ENCODE measurements at regions of chr1 and their contacts with region 1.

Region 1: GRCh38 chr1:200620273-200621131 is at the start of gene KIF14:
- DNase-seq: peak; percentile 89
- H3K4me3 ChIP-seq: peak within 1 kb of the TSS; percentile 58 to 94 (median 81)
- H3K27ac ChIP-seq: peak within 1 kb of the TSS; percentile 95
- H3K4me1 ChIP-seq: peaks cover 16% of the 10 kb centered on the region
- H3K27me3 ChIP-seq: no peaks in the 10 kb centered on the region
- CTCF ChIP-seq: no peak
- POLR2A ChIP-seq: peak; percentile 51
- total RNA-seq, gene KIF14: 12.6 and 13.8 TPM in 2 replicates

Region 2: GRCh38 chr1:200296091-200296661 is 324.3 kb before region 1 on chr1:
- CTCF ChIA-PET with region 1: no interaction called
- POLR2A ChIA-PET with region 1: no interaction called
- dilution Hi-C with region 1: no loop called
- intact Hi-C with region 1: no loop called
- DNase-seq: no peak
- H3K4me3 ChIP-seq: no peak overlapping the region
- H3K27ac ChIP-seq: no peak overlapping the region
- H3K4me1 ChIP-seq: no peaks in the 10 kb centered on the region
- H3K27me3 ChIP-seq: peaks cover 6% of the 10 kb centered on the region in 2 experiments
- CTCF ChIP-seq: no peak
- POLR2A ChIP-seq: no peak

Region 3: DNA sequence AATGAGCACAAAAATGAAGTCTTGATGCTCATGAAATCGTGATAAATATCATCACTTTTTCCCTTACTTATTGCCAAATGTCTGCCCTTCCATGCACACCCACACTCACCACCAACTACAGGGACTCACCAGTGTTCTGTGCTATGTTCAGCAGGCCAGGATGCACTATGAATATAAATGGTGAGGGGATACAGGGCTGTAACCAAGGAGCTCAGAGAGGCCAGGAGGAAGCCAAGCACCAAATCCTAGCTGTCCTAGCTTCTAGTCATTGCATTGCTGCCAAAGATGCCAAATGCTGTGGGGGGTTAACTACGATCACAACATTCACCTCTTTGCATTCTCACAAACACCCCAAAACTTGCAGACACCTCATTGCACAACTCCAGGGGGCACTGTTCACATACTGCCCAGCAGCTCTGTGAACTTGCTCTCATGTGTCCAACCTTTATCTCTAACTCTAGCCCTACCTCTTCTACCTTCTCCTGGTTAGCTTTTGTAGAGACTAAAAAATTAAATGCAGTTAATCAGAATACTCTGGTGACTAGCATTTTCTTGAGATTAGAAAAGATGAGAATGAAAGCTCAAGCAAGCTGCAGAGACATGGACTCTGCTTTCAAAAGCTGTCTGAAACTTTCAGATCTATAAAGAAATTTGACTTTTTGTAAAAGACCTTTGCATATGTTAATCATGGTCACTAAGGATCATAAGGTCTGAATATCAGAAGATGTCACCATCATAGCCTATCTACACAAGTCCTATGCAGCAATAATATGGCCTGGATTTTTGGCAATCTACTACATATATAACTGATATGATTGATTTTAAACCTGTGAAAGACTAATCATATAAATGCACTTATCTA is 14.0 kb after region 1 on chr1:
- CTCF ChIA-PET with region 1: interaction called, 33 read pairs
- POLR2A ChIA-PET with region 1: no interaction called
- dilution Hi-C with region 1: no loop called
- intact Hi-C with region 1: no loop called
- DNase-seq: no peak
- H3K4me3 ChIP-seq: no peak overlapping the region
- H3K27ac ChIP-seq: no peak overlapping the region
- H3K4me1 ChIP-seq: no peaks in the 10 kb centered on the region
- H3K27me3 ChIP-seq: no peaks in the 10 kb centered on the region
- CTCF ChIP-seq: no peak
- POLR2A ChIP-seq: no peak

Region 4: GRCh38 chr1:200699871-200700270 is 79.4 kb after region 1 on chr1:
- CTCF ChIA-PET with region 1: interaction called, 11 read pairs
- POLR2A ChIA-PET with region 1: no interaction called
- dilution Hi-C with region 1: no loop called
- intact Hi-C with region 1: no loop called
- DNase-seq: no peak
- H3K4me3 ChIP-seq: no peak overlapping the region
- H3K27ac ChIP-seq: no peak overlapping the region
- H3K4me1 ChIP-seq: peaks cover 5% of the 10 kb centered on the region
- H3K27me3 ChIP-seq: no peaks in the 10 kb centered on the region
- CTCF ChIP-seq: no peak
- POLR2A ChIP-seq: no peak

Region 5: DNA sequence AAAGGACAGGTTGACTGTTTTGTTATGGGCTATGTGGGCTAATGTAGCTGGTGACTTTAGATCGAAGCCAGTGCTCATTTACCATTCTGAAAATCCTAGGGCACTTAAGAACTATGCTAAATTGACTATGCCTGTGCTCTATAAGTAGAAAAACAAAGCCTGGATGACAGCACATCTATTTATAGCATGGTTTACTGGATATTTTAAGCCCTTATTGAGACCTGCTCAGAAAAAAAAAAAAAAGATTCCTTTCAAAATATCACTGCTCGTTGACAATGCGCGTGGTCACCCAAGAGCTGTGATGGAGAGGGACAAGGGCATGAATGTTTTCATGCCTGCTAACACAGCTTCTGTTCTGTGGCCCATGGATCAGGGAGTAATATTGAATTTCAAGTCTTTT is 166.3 kb after region 1 on chr1:
- CTCF ChIA-PET with region 1: interaction called, 32 read pairs
- POLR2A ChIA-PET with region 1: no interaction called
- dilution Hi-C with region 1: loop called (anchors 25 kb)
- intact Hi-C with region 1: no loop called
- DNase-seq: no peak
- H3K4me3 ChIP-seq: no peak overlapping the region
- H3K27ac ChIP-seq: no peak overlapping the region
- H3K4me1 ChIP-seq: no peaks in the 10 kb centered on the region
- H3K27me3 ChIP-seq: no peaks in the 10 kb centered on the region
- CTCF ChIP-seq: no peak
- POLR2A ChIP-seq: no peak

Region 6: GRCh38 chr1:200819726-200820125 is 199.2 kb after region 1 on chr1:
- CTCF ChIA-PET with region 1: interaction called, 11 read pairs
- POLR2A ChIA-PET with region 1: no interaction called
- dilution Hi-C with region 1: no loop called
- intact Hi-C with region 1: no loop called
- DNase-seq: no peak
- H3K4me3 ChIP-seq: no peak overlapping the region
- H3K27ac ChIP-seq: no peak overlapping the region
- H3K4me1 ChIP-seq: no peaks in the 10 kb centered on the region
- H3K27me3 ChIP-seq: no peaks in the 10 kb centered on the region
- CTCF ChIP-seq: no peak
- POLR2A ChIP-seq: no peak

Region 7: DNA sequence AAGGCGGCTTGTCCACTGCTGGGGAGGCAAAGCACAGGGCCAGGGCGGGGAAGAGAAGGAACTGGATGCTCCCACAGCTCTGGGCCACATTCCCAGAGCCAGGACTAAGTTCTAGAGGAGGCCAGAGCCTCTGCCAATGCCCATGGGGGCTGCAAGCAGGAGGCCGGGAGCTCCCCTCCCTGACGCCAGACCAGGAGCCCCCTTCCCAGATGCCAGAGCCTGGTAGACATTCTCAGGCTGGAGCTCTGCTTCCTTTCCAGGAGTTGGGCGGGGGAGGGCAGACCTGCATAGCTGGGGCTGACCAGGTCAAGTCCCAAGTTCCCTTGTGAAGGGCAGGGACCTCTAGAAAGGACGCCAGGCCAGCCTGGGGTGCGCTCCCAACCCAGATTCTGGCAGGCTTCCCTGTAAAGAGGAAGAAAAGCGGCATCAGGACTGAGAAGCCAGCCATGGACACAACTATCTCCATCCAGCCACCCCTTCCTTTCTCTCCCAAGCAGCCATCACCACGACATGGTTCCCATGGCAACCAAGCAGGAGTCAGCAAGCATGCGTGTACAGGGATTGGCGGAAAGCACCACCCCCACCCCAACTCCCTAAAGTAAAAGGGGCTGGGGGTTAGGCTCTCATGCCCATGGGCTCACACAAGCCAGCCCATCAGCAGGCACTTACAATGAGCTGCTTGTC is 389.6 kb after region 1 on chr1:
- CTCF ChIA-PET with region 1: no interaction called
- POLR2A ChIA-PET with region 1: no interaction called
- dilution Hi-C with region 1: no loop called
- intact Hi-C with region 1: no loop called
- DNase-seq: no peak
- H3K4me3 ChIP-seq: no peak overlapping the region
- H3K27ac ChIP-seq: no peak overlapping the region
- H3K4me1 ChIP-seq: peaks cover 19% of the 10 kb centered on the region
- H3K27me3 ChIP-seq: no peaks in the 10 kb centered on the region
- CTCF ChIP-seq: no peak
- POLR2A ChIP-seq: no peak

Region 8: DNA sequence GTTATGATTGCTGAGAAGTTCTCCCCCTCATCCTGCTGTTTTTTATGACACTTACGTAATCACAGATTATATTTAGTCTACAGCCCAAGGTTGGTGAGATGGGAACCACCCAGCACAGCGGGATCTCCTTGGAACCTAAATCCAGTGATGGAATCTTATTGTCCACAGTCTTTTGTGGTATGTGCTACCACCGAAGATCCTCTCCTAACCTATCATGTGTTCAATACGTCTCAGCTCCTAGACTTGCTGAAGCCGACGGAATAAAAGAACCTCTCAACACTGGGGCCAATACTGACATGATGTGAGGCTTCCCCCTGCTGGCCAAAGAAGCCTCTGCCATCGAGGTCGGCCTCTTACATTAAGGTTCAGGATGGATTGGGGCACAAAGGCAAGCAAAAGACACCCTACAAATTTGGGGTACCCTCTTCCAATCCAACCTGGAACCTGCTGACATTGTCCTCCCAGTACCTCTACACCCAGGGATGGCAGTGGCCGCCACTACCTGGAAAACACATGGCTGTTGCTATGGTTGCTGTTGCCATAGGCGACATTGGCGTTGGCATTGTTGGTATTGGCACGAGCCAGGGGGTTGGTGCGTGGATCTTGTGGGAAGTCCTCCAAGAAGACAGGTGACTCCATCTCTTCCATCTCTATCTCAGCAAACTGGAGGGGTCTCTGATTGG is 422.4 kb after region 1 on chr1:
- CTCF ChIA-PET with region 1: interaction called, 6 read pairs
- POLR2A ChIA-PET with region 1: no interaction called
- dilution Hi-C with region 1: no loop called
- intact Hi-C with region 1: loop called (anchors 2 kb)
- DNase-seq: peak; percentile 73
- H3K4me3 ChIP-seq: no peak overlapping the region
- H3K27ac ChIP-seq: no peak overlapping the region
- H3K4me1 ChIP-seq: no peaks in the 10 kb centered on the region
- H3K27me3 ChIP-seq: peaks cover 0 to 2% of the 10 kb centered on the region in 2 experiments
- CTCF ChIP-seq: peak; percentile 86 to 91
- POLR2A ChIP-seq: no peak

Measured in endothelial cell of umbilical vein (primary cell).